ENCODE measurements at regions of chr2 and their contacts with region 1.

Region 1: GRCh38 chr2:232600053-232600773 is 33.2 kb upstream of the EFHD1 start:
- DNase-seq: no peak
- H3K4me3 ChIP-seq: no peak overlapping the region
- H3K27ac ChIP-seq: no peak overlapping the region
- H3K4me1 ChIP-seq: no peaks in the 10 kb centered on the region
- H3K27me3 ChIP-seq: no peaks in the 10 kb centered on the region
- CTCF ChIP-seq: no peak
- EP300 ChIP-seq: no peak
- RAD21 ChIP-seq: no peak

Region 2: GRCh38 chr2:231706731-231707624 is 893.2 kb before region 1 on chr2:
- CTCF ChIA-PET with region 1: no interaction called
- POLR2A ChIA-PET with region 1: no interaction called
- DNase-seq: peak; percentile 93
- H3K4me3 ChIP-seq: peak overlapping the region; percentile 80 to 83
- H3K27ac ChIP-seq: peak overlapping the region; percentile 92 to 100
- H3K4me1 ChIP-seq: peaks cover 5 to 20% of the 10 kb centered on the region in 2 experiments; a peak in 2 of 4 replicates
- H3K27me3 ChIP-seq: no peaks in the 10 kb centered on the region
- CTCF ChIP-seq: peak; percentile 98
- EP300 ChIP-seq: peak in 1 of 2 experiments; percentile 9; a peak in 1 of 4 replicates
- RAD21 ChIP-seq: no peak

Region 3: DNA sequence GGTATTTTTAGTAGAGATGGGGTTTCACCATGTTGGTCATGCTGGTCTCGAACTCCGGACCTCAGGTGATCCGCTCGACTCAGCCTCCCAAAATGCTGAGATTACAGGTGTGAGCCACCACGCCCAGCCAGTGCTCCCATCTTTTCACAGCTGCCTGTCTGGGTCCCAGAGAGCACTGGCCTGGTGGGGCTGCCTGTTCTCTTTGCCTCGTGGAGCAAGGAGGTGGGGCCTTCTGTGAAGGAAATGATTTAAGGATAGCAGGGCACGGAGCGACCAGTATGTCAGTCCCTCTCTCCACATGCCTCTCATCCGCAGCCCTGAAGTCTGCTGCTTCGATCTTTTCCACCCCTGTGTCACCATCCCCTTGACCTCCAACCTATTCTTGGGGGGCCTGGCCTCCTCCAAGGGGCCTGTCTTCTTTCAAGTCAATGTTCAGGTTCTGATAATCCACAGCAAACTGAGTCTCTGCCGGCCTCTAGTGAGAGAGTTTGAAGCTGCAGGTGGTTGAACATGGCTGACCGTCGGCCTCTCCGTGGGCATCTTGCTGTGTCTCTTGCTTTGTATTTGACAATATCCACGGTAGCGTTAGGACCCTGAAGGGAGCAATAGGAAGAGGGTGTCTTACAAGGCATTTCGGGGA is 68.7 kb after region 1 on chr2:
- CTCF ChIA-PET with region 1: interaction called, 11 read pairs
- POLR2A ChIA-PET with region 1: no interaction called
- DNase-seq: no peak
- H3K4me3 ChIP-seq: no peak overlapping the region
- H3K27ac ChIP-seq: no peak overlapping the region
- H3K4me1 ChIP-seq: no peaks in the 10 kb centered on the region; a peak in 1 of 4 replicates
- H3K27me3 ChIP-seq: no peaks in the 10 kb centered on the region
- CTCF ChIP-seq: peak; percentile 42
- EP300 ChIP-seq: no peak
- RAD21 ChIP-seq: peak; percentile 58